Activated CD4-positive, alpha-beta T cell treated with anti-CD3 and anti-CD28 coated beads, Interleukin-2, amount 10 ng/mL, durations not matched to agents 24 days and 14 days (primary cell): ENCODE measurements at regions of chr6 and their contacts with region 1.

Region 1: GRCh38 chr6:31619805-31620585 is 520 bp upstream of the PRRC2A start:
- DNase-seq: peak; percentile 99
- H3K4me3 Mint-ChIP-seq: peak overlapping the region; percentile 90
- H3K27ac Mint-ChIP-seq: peak overlapping the region; percentile 95
- H3K4me1 Mint-ChIP-seq: peaks cover 46% of the 10 kb centered on the region
- H3K27me3 Mint-ChIP-seq: no peaks in the 10 kb centered on the region

Region 2: DNA sequence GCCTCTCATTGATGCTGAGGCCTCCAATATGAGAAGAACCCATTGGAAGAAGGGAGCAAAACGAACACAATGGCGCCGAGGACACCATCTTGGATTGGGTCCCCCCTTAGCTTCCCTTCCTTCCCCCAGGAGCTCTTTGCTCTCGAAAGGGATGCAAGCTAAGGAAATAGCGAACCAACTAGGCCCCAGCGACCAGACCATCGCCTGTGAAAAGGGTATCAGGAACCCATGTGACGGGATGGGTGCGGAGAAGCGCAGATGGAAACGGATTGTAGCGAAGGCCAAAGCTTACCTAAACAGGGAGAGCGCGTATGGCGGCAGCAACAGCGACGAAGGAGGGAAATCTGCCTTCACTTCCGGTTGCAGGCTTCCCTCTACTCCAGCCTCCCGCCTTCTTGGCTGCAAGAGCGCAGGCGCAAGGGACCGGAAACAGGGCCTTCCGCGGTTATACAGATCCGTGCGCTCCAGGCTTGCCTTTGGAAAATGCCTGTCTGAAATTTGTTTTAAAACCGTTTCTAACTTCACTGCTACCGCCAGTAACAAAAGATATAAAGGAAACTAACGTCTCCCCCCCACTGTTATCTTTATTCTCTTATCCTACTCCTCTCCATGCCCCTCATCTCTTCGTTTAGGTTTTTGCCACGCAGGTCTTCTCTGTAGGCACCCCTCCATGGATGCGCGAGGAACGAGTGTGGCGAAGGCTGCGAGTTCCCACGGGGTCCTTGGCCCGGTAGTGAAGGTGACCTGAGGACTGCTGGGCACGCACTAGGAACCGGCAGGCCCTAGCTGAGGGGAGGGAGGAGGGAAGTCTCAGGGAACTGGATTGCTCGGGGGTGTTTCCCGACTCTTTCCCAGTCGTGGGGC is 78.1 kb before region 1 on chr6 and contains the start of gene DDX39B:
- intact Hi-C with region 1: loop called (anchors 1 kb)
- DNase-seq: peak; percentile 98
- H3K4me3 Mint-ChIP-seq: peak within 1 kb of the TSS; percentile 81
- H3K27ac Mint-ChIP-seq: peak within 1 kb of the TSS; percentile 90
- H3K4me1 Mint-ChIP-seq: peaks cover 50% of the 10 kb centered on the region
- H3K27me3 Mint-ChIP-seq: no peaks in the 10 kb centered on the region
- total RNA-seq, gene DDX39B: 696 and 720 TPM in 2 replicates

Region 3: GRCh38 chr6:31580807-31581433 is 39.1 kb before region 1 on chr6:
- intact Hi-C with region 1: loop called (anchors 2 kb)
- DNase-seq: peak; percentile 96
- H3K4me3 Mint-ChIP-seq: peak overlapping the region; percentile 94
- H3K27ac Mint-ChIP-seq: peak overlapping the region; percentile 91
- H3K4me1 Mint-ChIP-seq: peaks cover 62% of the 10 kb centered on the region
- H3K27me3 Mint-ChIP-seq: no peaks in the 10 kb centered on the region

Region 4: GRCh38 chr6:31652925-31653718 is 33.1 kb after region 1 on chr6:
- intact Hi-C with region 1: loop called (anchors 1 kb)
- DNase-seq: no peak
- H3K4me3 Mint-ChIP-seq: peak overlapping the region; percentile 94
- H3K27ac Mint-ChIP-seq: peak overlapping the region; percentile 100
- H3K4me1 Mint-ChIP-seq: peaks cover 58% of the 10 kb centered on the region
- H3K27me3 Mint-ChIP-seq: peaks cover 3% of the 10 kb centered on the region

Region 5: DNA sequence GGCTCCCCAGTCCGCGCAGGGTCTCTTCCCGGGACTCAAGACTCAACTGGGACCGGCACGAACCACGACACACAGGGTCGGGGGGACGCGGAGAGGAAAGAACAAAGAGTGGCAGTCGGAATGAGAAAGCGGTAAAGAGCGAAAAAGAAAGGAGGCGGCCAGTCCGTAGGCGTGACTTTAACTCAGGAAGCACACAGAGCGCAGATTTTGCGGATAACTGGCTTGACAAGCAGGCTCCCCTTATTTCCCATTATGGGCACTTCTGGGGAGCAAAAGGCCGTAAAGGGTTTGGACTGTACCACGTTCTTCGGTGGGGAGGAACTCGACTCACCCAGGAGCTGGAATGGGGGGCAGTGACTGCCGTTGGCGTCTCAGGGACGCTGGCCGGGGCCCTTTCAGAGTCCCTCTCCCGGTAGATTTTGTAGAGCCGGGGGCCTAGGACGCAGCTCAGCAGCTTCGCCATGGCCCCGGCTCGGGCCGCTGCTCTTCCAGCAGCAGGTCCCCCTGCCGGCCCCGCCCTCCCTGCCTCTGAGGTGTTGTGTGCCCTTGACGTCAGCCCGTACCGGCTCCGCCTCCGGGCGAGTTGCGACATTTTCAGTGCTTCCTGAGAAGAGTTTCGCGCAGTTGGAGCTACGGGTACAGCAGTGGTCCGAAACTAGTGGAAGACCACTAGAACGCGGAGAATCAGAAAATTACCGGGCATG is 83.0 kb after region 1 on chr6 and contains the start of gene ABHD16A:
- intact Hi-C with region 1: no loop called
- DNase-seq: peak; percentile 99
- H3K4me3 Mint-ChIP-seq: peak within 1 kb of the TSS; percentile 98
- H3K27ac Mint-ChIP-seq: peak within 1 kb of the TSS; percentile 99
- H3K4me1 Mint-ChIP-seq: peaks cover 24% of the 10 kb centered on the region
- H3K27me3 Mint-ChIP-seq: no peaks in the 10 kb centered on the region
- total RNA-seq, gene ABHD16A: 43.1 and 44.7 TPM in 2 replicates